Activated T-helper 2 cell treated with anti-CD3 and anti-CD28 coated beads, Interferon-gamma antibody, Interleukin-2, Interleukin-4, amounts not matched to agents 10 μg/mL and 5 μg/mL and 100 μg/mL, durations not matched to agents 14 hours and 24 hours and 36 hours (primary cell): ENCODE measurements at regions of chr1 and their contacts with region 1.

Region 1: GRCh38 chr1:172588296-172589291 is 55.6 kb downstream of the SUCO start:
- DNase-seq: no peak
- H3K4me3 Mint-ChIP-seq: no peak overlapping the region
- H3K27ac Mint-ChIP-seq: peak overlapping the region; percentile 72
- H3K4me1 Mint-ChIP-seq: peaks cover 28% of the 10 kb centered on the region
- H3K27me3 Mint-ChIP-seq: no peaks in the 10 kb centered on the region

Region 2: DNA sequence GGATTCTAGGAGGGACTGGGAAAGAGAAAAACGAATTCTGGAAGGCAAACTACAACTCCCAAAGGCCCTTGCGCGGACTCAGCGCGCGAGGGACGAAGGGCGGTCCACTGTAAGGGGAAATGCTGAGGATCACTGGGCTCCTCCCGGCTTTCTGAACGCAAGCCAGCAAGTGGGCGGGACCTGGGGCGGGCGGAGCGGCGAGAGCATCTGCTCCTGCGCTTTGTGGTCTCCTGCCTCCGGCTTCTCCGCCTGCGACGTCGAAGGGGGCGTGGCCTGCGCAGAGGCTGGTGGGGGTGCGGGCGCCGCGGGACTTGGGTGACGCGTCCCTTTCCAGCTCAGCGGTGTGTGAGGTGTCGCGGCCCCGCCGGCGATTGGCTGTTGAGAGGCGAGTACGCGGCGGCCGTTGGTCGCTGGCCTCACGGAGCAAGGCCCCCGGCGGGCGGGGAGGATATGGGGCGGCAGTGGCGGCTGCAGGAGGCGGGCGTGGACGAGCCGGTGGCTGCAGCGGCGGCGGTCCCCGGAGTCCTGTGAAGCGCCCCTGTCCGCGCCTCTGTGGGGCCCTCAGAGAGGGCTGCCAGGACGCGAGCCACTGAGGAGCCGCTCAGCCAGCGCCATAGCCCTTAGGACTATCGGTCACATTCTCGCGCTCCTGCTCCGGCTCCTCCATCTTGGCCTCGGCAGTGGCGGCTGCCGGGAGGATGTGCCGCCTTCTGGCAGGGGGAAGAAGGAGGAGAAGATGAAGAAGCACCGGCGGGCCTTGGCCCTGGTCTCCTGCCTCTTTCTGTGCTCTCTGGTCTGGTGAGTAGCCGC is 55.7 kb before region 1 on chr1 and contains the start of gene SUCO:
- intact Hi-C with region 1: loop called (anchors 5 kb)
- DNase-seq: peak; percentile 100
- H3K4me3 Mint-ChIP-seq: peak within 1 kb of the TSS; percentile 95
- H3K27ac Mint-ChIP-seq: peak within 1 kb of the TSS; percentile 99
- H3K4me1 Mint-ChIP-seq: peaks cover 38% of the 10 kb centered on the region
- H3K27me3 Mint-ChIP-seq: peaks cover 9% of the 10 kb centered on the region
- total RNA-seq, gene SUCO: 28.2 and 33.3 TPM in 2 replicates

Region 3: DNA sequence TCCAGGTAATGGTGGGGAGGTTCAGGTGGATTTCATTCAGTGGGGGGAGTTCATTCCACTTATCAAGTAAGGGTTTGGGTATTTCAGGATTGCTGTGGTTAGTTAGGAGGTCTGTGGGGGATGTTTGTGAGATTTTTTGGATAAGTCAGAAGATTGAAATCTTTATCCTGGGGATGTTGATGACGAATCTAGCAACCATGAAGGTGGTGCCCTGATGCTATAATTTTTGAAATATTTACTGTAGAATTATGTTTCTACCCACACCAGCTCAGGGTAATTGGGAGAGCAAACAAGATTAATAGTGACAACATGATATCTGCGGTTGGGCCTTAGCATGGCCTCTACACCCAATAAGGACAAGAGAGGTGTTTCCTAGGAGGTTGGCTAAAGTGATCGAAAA is 27.3 kb before region 1 on chr1:
- intact Hi-C with region 1: no loop called
- DNase-seq: no peak
- H3K4me3 Mint-ChIP-seq: no peak overlapping the region
- H3K27ac Mint-ChIP-seq: no peak overlapping the region
- H3K4me1 Mint-ChIP-seq: peaks cover 4% of the 10 kb centered on the region
- H3K27me3 Mint-ChIP-seq: no peaks in the 10 kb centered on the region

Region 4: DNA sequence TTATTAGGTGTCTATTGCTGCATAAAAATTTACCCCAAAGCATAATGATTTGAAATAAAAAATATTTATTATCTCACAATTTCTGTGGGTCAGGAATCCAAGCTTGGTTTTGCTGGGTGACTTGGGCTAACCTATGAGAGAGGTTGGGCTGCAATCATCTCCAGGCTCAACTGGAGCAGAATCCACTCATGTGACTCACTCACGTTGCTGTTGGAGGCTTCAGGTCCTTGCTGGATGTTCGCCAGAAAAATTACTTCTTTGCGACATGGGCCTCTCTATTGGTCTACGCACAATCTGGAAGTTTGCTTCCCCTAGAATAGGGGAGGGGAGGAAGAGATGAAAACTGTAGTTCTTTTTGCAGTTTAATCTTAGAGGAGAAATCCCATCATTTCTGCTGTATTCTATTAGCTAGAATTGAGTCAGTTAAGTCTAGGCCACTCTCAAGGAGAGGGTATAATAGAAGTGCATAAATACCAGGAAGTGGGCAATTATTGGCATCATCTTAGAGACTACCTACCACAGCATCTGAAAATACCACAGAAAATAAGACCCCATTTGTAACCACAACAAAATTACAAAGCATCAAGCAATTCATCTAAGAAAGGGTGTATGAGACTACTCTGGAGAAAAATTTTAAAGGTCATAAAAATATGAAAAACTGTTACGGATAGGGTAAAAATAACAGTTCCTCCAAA is 64.6 kb after region 1 on chr1:
- intact Hi-C with region 1: no loop called
- DNase-seq: no peak
- H3K4me3 Mint-ChIP-seq: no peak overlapping the region
- H3K27ac Mint-ChIP-seq: no peak overlapping the region
- H3K4me1 Mint-ChIP-seq: peaks cover 33% of the 10 kb centered on the region
- H3K27me3 Mint-ChIP-seq: peaks cover 1% of the 10 kb centered on the region